ENCODE measurements at regions of chr2 and their contacts with region 1.

Region 1: GRCh38 chr2:210460322-210461227 is 16.0 kb downstream of the LANCL1 start:
- DNase-seq: no peak
- CTCF ChIP-seq: no peak

Region 2: GRCh38 chr2:210215120-210215519 is 245.5 kb before region 1 on chr2:
- CTCF ChIA-PET with region 1: no interaction called
- POLR2A ChIA-PET with region 1: no interaction called
- DNase-seq: no peak
- CTCF ChIP-seq: no peak

Region 3: GRCh38 chr2:210440206-210440605 is 20.4 kb before region 1 on chr2:
- CTCF ChIA-PET with region 1: no interaction called
- POLR2A ChIA-PET with region 1: no interaction called
- DNase-seq: no peak
- CTCF ChIP-seq: no peak

Region 4: GRCh38 chr2:210476194-210477128 is 15.9 kb after region 1 on chr2 and contains the start of gene LANCL1:
- CTCF ChIA-PET with region 1: interaction called, 14 read pairs
- POLR2A ChIA-PET with region 1: no interaction called
- DNase-seq: peak; percentile 93
- CTCF ChIP-seq: peak; percentile 11